ENCODE measurements at regions of chr1 and their contacts with region 1.

Region 1: DNA sequence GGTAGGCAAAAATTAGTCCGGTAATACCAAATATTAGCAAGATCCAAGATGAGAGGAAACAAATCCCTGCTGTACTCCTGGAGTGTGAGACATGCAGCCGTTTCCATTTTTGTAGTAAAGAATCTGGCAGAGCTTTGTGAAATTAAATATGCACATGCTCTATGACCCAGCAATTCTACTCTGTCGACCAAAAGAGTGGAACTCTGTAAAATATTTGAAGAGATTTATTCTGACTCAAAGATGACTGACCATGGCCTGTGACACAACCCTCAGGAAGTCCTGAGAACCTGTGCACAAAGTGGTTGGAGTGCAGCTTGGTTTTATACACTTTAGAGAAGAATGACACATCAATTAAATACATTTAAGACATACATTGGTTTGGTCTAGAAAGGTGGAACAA is 16.2 kb downstream of the HAX1 start:
- DNase-seq: no peak
- ATAC-seq: no peak
- H3K4me3 ChIP-seq: no peak overlapping the region
- H3K27ac ChIP-seq: no peak overlapping the region
- H3K4me1 ChIP-seq: no peaks in the 10 kb centered on the region
- H3K27me3 ChIP-seq: peaks cover 4% of the 10 kb centered on the region
- CTCF ChIP-seq: no peak
- POLR2A ChIP-seq: no peak
- RAD21 ChIP-seq: no peak

Region 2: GRCh38 chr1:153763365-153764225 is 525.1 kb before region 1 on chr1:
- CTCF ChIA-PET with region 1: no interaction called
- POLR2A ChIA-PET with region 1: interaction called, 12 read pairs
- dilution Hi-C with region 1: no loop called
- in situ Hi-C with region 1: no loop called
- intact Hi-C with region 1: no loop called
- DNase-seq: no peak
- ATAC-seq: no peak
- H3K4me3 ChIP-seq: no peak overlapping the region
- H3K27ac ChIP-seq: no peak overlapping the region
- H3K4me1 ChIP-seq: no peaks in the 10 kb centered on the region
- H3K27me3 ChIP-seq: no peaks in the 10 kb centered on the region
- CTCF ChIP-seq: no peak
- POLR2A ChIP-seq: no peak
- RAD21 ChIP-seq: no peak

Measured in IMR-90 (cell line).